Prostate gland (tissue), 2 donors: ENCODE measurements at regions of chr16 and their contacts with region 1.

Region 1: GRCh38 chr16:20849587-20850390 is 43.5 kb downstream of the REXO5 start:
- DNase-seq: peak; percentile 59
- H3K4me3 ChIP-seq: no peak overlapping the region
- H3K27ac ChIP-seq: peak overlapping the region; percentile 48 to 66
- H3K4me1 ChIP-seq: peaks cover 14% of the 10 kb centered on the region
- H3K27me3 ChIP-seq: no peaks in the 10 kb centered on the region
- CTCF ChIP-seq: peak; percentile 84 to 94 (median 94)
- POLR2A ChIP-seq: no peak

Region 2: DNA sequence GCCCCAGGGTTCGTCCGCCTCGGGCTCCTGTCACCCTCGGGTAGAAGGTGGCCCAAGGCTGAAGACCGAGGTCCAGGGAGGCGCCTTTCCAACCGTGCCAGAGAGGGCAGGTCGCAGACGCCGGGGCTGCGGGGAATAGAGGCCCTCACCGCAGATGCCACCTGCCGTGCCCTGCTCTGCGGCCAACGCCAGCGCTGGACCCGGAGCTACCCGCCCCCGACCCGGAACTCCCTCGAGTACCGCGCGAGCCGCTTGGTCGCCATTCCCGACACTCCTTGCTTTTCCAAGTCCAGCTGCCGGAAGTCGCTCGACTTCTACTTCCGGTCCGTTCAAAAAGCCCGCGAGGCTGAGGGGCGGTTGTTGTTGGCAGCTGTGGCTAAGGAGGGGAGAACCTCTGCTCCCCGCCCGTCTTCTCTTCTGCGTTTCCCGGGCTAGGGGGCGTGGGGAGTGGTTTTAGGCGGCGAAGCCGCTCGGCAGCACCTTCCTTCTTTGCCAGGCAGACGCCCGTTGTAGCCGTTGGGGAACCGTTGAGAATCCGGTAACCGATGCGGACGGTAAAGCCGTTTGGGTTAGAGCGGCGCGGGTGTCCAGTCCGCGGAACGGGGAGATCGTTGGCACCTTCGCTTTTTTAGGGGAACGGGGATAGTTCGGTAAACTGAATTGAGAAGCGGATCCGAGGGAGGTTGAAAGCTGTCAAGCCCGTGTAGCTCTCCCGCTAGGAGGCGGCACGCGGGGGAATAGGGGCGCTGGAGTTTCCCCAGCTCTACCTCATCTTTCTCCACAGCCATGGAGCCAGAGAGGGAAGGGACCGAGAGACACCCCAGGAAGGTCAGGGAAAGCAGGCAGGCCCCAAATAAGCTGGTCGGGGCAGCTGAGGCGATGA is 43.4 kb before region 1 on chr16 and contains the starts of genes ERI2 and REXO5:
- intact Hi-C with region 1: loop called (anchors 5 kb)
- DNase-seq: peak; percentile 90
- H3K4me3 ChIP-seq: peak within 1 kb of the TSS; percentile 63 to 69
- H3K27ac ChIP-seq: peak within 1 kb of the TSS; percentile 95 to 96
- H3K4me1 ChIP-seq: peaks cover 9% of the 10 kb centered on the region
- H3K27me3 ChIP-seq: no peaks in the 10 kb centered on the region
- CTCF ChIP-seq: peak; percentile 34 to 43 (median 38)
- POLR2A ChIP-seq: peak; percentile 78
- total RNA-seq, gene ERI2: 31.6 to 35.2 TPM
- total RNA-seq, gene REXO5: 12.1 to 67.1 TPM

Region 3: GRCh38 chr16:20900299-20901067 is 50.7 kb after region 1 on chr16 and contains the starts of genes DCUN1D3 and LYRM1:
- intact Hi-C with region 1: loop called (anchors 5 kb)
- DNase-seq: peak; percentile 97
- H3K4me3 ChIP-seq: peak within 1 kb of the TSS; percentile 57 to 73
- H3K27ac ChIP-seq: peak within 1 kb of the TSS; percentile 97
- H3K4me1 ChIP-seq: peaks cover 5% of the 10 kb centered on the region
- H3K27me3 ChIP-seq: no peaks in the 10 kb centered on the region
- CTCF ChIP-seq: peak in 1 of 4 experiments; percentile 9
- POLR2A ChIP-seq: peak; percentile 80
- total RNA-seq, gene DCUN1D3: 7.2 to 16.5 TPM
- total RNA-seq, gene LYRM1: 26.1 to 64.5 TPM

Region 4: DNA sequence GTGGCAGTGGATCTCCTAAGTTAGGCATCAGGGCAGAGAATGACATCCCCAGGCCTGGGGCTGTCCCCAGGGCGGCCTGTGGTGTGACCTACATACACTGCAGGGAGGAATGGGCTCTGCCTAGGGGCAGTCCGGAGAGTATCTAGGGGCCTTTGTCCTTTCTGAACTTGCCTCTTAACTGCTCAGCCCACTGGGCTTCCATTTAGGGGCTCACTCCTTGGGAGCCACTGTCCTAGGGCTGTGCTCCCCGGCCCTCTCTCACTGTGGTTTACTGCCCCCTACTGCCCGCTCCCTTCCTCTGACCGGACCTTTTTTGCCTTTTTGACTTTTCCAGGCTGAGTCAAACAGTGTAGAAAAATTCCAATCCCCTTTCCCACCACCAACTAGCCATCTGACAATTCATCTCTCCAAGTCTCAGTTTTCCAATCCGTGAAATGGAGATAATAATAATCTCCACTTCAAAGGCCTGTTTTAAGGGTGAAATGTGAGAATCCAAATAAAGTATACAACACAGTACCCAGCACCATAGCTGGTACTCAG is 234.0 kb after region 1 on chr16:
- intact Hi-C with region 1: loop called (anchors 1 kb)
- DNase-seq: peak; percentile 37
- H3K4me3 ChIP-seq: no peak overlapping the region
- H3K27ac ChIP-seq: no peak overlapping the region
- H3K4me1 ChIP-seq: no peaks in the 10 kb centered on the region
- H3K27me3 ChIP-seq: no peaks in the 10 kb centered on the region
- CTCF ChIP-seq: peak in 3 of 4 experiments; percentile 69 to 70 (median 69)
- POLR2A ChIP-seq: no peak

Region 5: DNA sequence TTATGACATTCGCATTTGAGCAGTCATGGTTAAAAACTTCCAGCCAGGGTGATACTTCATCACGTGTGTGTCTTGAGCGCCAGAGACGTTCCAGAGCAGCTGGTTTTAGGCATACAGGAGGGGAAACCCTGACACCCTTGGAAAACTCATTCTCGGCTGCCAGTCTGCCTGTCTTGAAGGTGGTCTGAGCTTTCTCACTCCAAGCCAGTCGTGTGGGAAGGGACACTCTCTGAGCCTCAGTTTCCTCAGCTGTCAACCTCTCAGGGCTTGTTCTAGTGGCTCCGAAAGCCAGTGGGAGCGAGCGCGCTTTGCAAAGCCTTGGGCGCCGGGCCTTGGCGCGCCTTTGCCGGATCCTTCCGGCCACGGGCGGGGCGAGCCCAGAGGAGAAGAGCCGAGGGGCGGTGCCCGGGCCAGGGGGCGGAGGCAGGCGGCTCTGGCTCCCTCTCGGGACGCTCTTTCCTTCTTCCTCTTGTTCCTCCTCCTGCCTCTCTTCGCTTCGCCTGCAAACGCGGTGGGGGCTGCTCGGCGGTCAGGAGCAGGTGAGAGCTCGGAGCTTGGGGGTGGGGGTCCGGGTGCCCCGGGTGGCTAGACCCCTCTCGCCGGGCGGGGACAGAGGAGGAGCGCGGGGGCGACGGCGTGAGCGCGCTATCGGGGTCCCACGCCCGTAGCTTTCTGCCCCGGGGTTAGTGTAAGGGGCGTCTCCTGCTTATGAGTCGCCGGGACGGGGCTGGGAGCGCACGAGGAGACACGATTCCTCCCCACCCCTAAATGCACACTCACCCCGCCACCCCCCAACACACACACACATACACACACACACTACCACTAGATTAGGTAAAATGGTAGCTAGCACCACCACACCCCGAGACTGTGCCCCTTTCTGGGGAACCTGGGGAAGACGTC is 308.7 kb after region 1 on chr16 and contains the start of gene LDAF1:
- intact Hi-C with region 1: loop called (anchors 5 kb)
- DNase-seq: peak; percentile 87
- H3K4me3 ChIP-seq: peak within 1 kb of the TSS; percentile 64
- H3K27ac ChIP-seq: peak within 1 kb of the TSS; percentile 84 to 88
- H3K4me1 ChIP-seq: peaks cover 5% of the 10 kb centered on the region
- H3K27me3 ChIP-seq: no peaks in the 10 kb centered on the region
- CTCF ChIP-seq: peak in 2 of 4 experiments; percentile 26
- POLR2A ChIP-seq: peak; percentile 89
- total RNA-seq, gene LDAF1: 97.5 to 180 TPM